ENCODE measurements at regions of chr17 and their contacts with region 1.

Region 1: DNA sequence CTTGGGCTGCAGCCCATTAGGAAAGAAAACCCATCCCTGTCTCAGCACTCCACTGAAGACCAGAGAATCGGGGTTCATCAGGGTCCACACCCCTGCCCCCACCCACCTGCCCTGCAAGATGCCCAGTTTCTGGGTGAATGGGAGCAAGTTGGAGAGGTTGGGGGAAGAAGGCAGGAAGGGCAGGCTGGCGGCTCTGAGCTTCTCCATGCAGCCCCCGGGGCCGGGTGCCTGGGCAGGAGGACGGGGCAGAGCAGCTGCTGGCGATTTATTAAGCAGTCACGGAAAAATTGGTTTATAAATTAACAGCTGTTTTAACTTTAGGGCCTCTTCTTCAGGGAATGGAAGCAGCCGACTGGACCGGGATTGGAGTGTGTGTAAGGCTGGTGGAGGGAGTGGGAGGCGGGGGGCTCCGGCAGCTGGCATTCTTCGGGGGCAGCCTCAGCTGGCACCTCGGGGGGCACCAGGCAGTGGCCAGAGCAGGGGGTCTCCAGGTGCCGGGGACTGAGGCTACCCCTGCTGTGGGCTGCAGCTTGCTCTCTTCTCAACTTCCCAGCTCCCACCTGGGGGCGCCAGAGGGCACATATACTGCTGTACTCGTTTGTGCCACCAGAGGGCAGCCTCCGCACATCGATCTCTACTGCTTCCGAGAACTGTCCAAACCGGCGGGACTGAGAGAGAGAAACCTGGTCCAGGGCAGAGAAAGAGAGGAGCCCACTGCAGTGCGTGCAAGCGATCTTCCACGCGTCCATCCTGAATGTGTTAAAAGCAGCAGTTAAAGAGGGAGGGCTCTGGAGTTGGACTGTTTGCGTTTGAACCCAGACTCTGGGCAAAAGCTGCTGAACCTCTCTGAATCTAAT is 5.0 kb upstream of the PPP1R1B start:
- DNase-seq: peak; percentile 74 to 95 (median 86)
- ATAC-seq: peak; percentile 94
- H3K4me3 ChIP-seq: peak overlapping the region; percentile 41
- H3K4me3 Mint-ChIP-seq: peak overlapping the region in 8 of 10 donors; percentile 34 to 82 (median 58)
- H3K27ac ChIP-seq: no peak overlapping the region
- H3K27ac Mint-ChIP-seq: peak overlapping the region in 4 of 9 donors; percentile 10 to 74 (median 66)
- H3K4me1 ChIP-seq: peaks cover 12 to 26% of the 10 kb centered on the region in 2 donors
- H3K4me1 Mint-ChIP-seq: peaks cover 15 to 38% (median 24%) of the 10 kb centered on the region in 7 donors
- H3K27me3 ChIP-seq: peaks cover 3 to 7% of the 10 kb centered on the region in 2 donors
- H3K27me3 Mint-ChIP-seq: peaks cover 5 to 69% (median 18%) of the 10 kb centered on the region in 5 donors

Region 2: DNA sequence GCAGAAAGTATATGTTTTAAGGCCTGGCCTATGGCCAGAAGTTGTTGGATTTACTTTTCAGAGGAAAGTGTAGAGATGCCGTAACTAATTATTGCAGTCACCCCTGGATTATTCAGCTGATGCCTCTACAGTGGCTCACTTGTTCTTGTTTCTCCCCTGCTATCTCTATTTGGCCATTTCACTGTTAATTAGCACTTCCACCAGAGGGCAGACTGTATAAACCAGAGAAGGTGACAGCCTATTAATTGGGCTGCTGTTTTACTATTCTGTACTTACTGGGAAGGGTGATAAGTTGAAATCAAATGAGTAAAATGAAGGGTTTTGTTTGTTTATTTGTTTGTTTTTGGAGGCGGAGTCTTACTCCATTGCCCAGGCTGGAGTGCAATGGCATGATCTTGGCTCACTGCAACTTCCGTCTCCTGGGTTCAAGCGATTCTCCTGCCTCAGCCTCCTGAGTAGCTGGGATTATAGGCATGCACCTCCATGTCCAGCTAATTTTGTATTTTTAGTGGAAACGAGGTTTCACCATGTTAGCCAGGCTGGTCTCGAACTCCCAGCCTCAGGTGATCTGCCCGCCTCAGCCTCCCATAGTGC is 94.4 kb before region 1 on chr17:
- CTCF ChIA-PET with region 1: no interaction called
- POLR2A ChIA-PET with region 1: no interaction called
- intact Hi-C with region 1: loop called in 1 of 2 experiments (anchors 1 kb)
- DNase-seq: peak in 5 of 9 donors; percentile 9 to 25 (median 16)
- ATAC-seq: no peak
- H3K4me3 ChIP-seq: no peak overlapping the region
- H3K4me3 Mint-ChIP-seq: no peak overlapping the region
- H3K27ac ChIP-seq: no peak overlapping the region
- H3K27ac Mint-ChIP-seq: no peak overlapping the region
- H3K4me1 ChIP-seq: no peaks in the 10 kb centered on the region
- H3K4me1 Mint-ChIP-seq: peaks cover 0 to 7% (median 0%) of the 10 kb centered on the region in 7 donors
- H3K27me3 ChIP-seq: no peaks in the 10 kb centered on the region
- H3K27me3 Mint-ChIP-seq: no peaks in the 10 kb centered on the region

Region 3: GRCh38 chr17:39636927-39637736 is 15.4 kb after region 1 on chr17 and contains the start of gene STARD3:
- CTCF ChIA-PET with region 1: interaction called, 104 read pairs
- POLR2A ChIA-PET with region 1: interaction called, 6 read pairs
- intact Hi-C with region 1: loop called (anchors 1 kb)
- DNase-seq: peak; percentile 80 to 92 (median 86)
- ATAC-seq: peak; percentile 95
- H3K4me3 ChIP-seq: peak within 1 kb of the TSS; percentile 86
- H3K4me3 Mint-ChIP-seq: peak within 1 kb of the TSS; percentile 89 to 98 (median 95)
- H3K27ac ChIP-seq: peak within 1 kb of the TSS; percentile 92
- H3K27ac Mint-ChIP-seq: peak within 1 kb of the TSS; percentile 76 to 97 (median 92)
- H3K4me1 ChIP-seq: peaks cover 43 to 49% of the 10 kb centered on the region in 2 donors
- H3K4me1 Mint-ChIP-seq: peaks cover 40 to 71% (median 60%) of the 10 kb centered on the region in 7 donors
- H3K27me3 ChIP-seq: no peaks in the 10 kb centered on the region
- H3K27me3 Mint-ChIP-seq: peaks cover 0 to under 1% (median 0%) of the 10 kb centered on the region in 5 donors
- total RNA-seq, gene STARD3: 69.8 to 143 (median 99.3) TPM

Region 4: GRCh38 chr17:39668199-39668966 is 46.6 kb after region 1 on chr17 and contains the start of gene PNMT:
- CTCF ChIA-PET with region 1: interaction called, 36 read pairs
- POLR2A ChIA-PET with region 1: interaction called, 7 read pairs
- intact Hi-C with region 1: loop called (anchors 1 to 5 kb)
- DNase-seq: peak; percentile 44 to 76 (median 63)
- ATAC-seq: peak; percentile 83
- H3K4me3 ChIP-seq: peak within 1 kb of the TSS; percentile 50
- H3K4me3 Mint-ChIP-seq: peak within 1 kb of the TSS; percentile 50 to 83 (median 68)
- H3K27ac ChIP-seq: peak within 1 kb of the TSS; percentile 51
- H3K27ac Mint-ChIP-seq: peak within 1 kb of the TSS in 1 of 9 donors; percentile 26
- H3K4me1 ChIP-seq: peaks cover 4 to 13% of the 10 kb centered on the region in 2 donors
- H3K4me1 Mint-ChIP-seq: peaks cover 5 to 23% (median 14%) of the 10 kb centered on the region in 7 donors
- H3K27me3 ChIP-seq: no peaks in the 10 kb centered on the region
- H3K27me3 Mint-ChIP-seq: peaks cover 0 to 48% (median 5%) of the 10 kb centered on the region in 5 donors
- total RNA-seq, gene PNMT: 0.42 to 0.89 (median 0.50) TPM in 4 of 5 experiments, not detected in the other

Region 5: DNA sequence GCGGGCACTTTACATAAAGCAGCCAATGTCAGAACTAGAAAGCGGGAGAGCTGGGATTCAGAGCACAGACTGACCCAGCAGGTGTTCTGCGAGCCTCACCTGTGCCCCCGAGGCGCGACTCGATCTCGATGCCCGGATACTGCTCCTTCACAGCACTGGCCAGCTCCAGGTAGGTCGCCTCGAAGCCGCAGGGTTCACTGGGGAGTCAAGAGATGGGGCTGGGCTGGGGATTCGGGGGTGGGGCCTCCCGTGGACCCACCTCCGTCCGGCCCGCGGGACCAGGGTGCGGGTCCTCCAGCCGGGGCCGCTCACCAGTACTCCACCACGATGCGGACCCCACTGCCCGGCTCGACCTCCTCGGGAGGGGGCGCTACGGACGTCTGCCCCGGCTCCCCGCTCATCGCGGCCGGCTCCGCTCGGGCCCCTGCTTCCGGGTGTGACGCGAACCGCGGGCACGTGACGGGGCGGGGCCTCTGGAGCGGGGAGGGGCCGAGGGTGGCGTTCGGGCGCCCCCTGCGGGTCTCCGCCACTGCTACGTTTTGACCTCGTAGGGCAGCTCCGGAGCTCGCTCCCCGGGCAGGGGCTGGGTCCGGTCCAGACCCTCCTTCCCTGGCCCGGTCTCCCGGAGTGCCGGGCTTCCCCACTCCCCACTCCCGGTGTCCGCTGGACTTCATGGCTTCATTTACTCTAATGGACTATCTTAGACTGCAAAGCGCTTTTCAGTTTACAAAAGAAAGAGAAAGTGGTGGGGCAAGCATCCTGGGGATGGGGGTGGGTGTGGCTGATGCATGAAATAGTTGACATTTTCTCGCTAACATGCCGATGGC is 108.6 kb after region 1 on chr17 and contains the start of gene MIEN1:
- CTCF ChIA-PET with region 1: interaction called, 29 read pairs
- POLR2A ChIA-PET with region 1: interaction called, 8 read pairs
- intact Hi-C with region 1: loop called (anchors 1 kb)
- DNase-seq: peak; percentile 87 to 100 (median 95)
- ATAC-seq: peak; percentile 98
- H3K4me3 ChIP-seq: peak within 1 kb of the TSS; percentile 95
- H3K4me3 Mint-ChIP-seq: peak within 1 kb of the TSS; percentile 88 to 96 (median 92)
- H3K27ac ChIP-seq: peak within 1 kb of the TSS; percentile 95
- H3K27ac Mint-ChIP-seq: peak within 1 kb of the TSS; percentile 84 to 98 (median 94)
- H3K4me1 ChIP-seq: peaks cover 10% of the 10 kb centered on the region in 2 donors
- H3K4me1 Mint-ChIP-seq: peaks cover 11 to 20% (median 16%) of the 10 kb centered on the region in 7 donors
- H3K27me3 ChIP-seq: no peaks in the 10 kb centered on the region
- H3K27me3 Mint-ChIP-seq: peaks cover 0 to 7% (median 0%) of the 10 kb centered on the region in 5 donors
- total RNA-seq, gene MIEN1: 28.7 to 40.1 (median 32.3) TPM

Region 6: DNA sequence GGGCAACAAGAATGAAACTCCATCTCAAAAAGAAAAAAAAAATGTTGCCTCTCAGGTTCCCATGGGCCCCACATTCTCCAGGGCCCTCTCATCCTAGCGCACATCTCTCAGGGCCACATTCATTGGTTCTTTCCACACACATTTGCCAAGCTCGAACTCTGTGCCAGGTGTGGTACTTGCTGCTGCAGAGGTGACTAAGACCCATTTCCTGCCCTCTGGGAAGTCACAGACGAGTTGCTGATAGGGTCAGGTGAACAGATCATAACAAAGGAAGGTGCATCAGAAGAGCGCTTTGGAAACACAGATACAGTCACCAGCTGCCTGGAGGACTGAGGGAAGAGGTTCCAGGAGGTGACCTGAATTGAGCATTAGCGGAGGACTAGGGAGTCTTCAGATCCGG is 342.1 kb after region 1 on chr17:
- CTCF ChIA-PET with region 1: interaction called, 3 read pairs
- POLR2A ChIA-PET with region 1: no interaction called
- intact Hi-C with region 1: loop called in 1 of 2 experiments (anchors 5 kb)
- DNase-seq: peak in 4 of 9 donors; percentile 23 to 40 (median 28)
- ATAC-seq: no peak
- H3K4me3 ChIP-seq: no peak overlapping the region
- H3K4me3 Mint-ChIP-seq: peak overlapping the region in 9 of 10 donors; percentile 2 to 66 (median 39)
- H3K27ac ChIP-seq: no peak overlapping the region
- H3K27ac Mint-ChIP-seq: peak overlapping the region in 8 of 9 donors; percentile 40 to 96 (median 69)
- H3K4me1 ChIP-seq: peaks cover 13 to 28% of the 10 kb centered on the region in 2 donors
- H3K4me1 Mint-ChIP-seq: peaks cover 16 to 51% (median 35%) of the 10 kb centered on the region in 7 donors
- H3K27me3 ChIP-seq: no peaks in the 10 kb centered on the region
- H3K27me3 Mint-ChIP-seq: peaks cover 0 to 16% (median 0%) of the 10 kb centered on the region in 5 donors

Measured in naive thymus-derived CD4-positive, alpha-beta T cell (primary cell).